ENCODE measurements at regions of chr15 and their contacts with region 1.

Region 1: DNA sequence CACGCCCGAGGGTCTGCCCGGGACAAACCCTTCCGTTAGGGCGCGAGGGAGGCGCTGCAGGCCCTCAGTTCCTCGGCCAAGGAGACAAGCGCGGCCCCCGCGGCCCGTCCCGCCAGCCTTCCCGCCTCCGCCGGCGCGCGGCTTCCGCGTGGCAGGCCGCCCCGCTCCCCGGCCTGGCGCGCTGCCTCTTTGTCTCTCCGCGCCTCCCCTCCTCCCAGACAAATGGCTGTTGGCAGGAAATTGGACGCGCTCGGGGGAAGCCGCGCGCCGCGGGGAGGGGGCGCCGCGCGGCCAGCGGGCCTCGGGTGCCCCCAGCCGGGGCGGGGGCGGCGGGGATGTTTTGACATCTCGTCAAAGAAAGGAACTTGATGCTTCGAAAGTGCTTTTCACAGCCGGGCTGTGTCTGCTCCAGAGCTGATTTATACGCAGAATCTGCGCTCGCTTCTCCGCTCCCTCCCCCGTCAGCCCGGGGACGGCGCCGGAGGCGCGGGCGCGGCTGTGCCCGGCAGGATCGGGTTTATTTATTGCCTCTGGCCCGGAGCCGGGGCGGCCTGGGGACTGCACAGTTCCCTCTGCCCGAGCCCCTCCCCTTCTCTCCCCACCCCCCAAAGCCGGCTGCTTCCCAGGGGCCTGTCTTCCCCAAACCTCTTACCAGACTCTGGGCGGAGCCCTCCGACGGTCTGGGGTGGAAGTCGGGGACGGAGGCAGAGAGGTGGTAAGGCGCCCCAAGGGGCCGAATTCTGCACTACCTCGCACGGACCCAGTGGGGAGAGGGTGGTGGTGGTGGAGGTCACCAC is 20.7 kb downstream of the SHF start:
- DNase-seq: peak; percentile 78 to 80
- ATAC-seq: peak; percentile 92 to 95
- H3K4me3 ChIP-seq: peak overlapping the region; percentile 67
- H3K27ac ChIP-seq: peak overlapping the region; percentile 92 to 100
- H3K4me1 ChIP-seq: peaks cover 11% of the 10 kb centered on the region
- CTCF ChIP-seq: peak; percentile 32; the same call in 1 of the 3 replicates
- EP300 ChIP-seq: no peak
- POLR2A ChIP-seq: peak; percentile 26
- RAD21 ChIP-seq: peak in 1 of 2 experiments; percentile 26; a peak in 1 of 5 replicates

Region 2: DNA sequence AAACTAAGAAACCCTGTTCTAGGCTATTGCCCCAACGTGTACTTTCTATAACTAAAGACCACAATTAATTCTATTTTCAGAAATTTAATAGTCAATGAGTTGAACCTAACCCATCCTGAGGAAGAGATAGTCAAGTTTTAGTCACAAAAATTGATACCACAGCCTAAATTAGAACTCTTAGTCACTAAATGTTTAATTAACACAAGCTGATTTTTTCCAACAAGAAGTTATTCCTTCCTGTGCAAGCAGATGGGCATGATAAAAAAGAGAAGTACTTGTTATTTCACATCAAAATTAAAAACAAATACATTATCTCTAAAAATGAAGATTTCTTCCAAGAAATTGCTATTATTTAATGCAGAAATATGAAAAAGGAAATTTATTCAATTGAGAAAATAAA is 248.9 kb before region 1 on chr15:
- CTCF ChIA-PET with region 1: no interaction called
- POLR2A ChIA-PET with region 1: no interaction called
- DNase-seq: no peak
- ATAC-seq: no peak
- H3K4me3 ChIP-seq: no peak overlapping the region
- H3K27ac ChIP-seq: no peak overlapping the region
- H3K4me1 ChIP-seq: no peaks in the 10 kb centered on the region
- CTCF ChIP-seq: no peak
- EP300 ChIP-seq: no peak
- POLR2A ChIP-seq: no peak
- RAD21 ChIP-seq: no peak

Region 3: GRCh38 chr15:45146405-45146804 is 20.6 kb before region 1 on chr15:
- CTCF ChIA-PET with region 1: interaction called, 30 read pairs
- POLR2A ChIA-PET with region 1: no interaction called
- DNase-seq: no peak
- ATAC-seq: no peak
- H3K4me3 ChIP-seq: no peak overlapping the region
- H3K27ac ChIP-seq: no peak overlapping the region
- H3K4me1 ChIP-seq: no peaks in the 10 kb centered on the region
- CTCF ChIP-seq: no peak
- EP300 ChIP-seq: no peak
- POLR2A ChIP-seq: no peak
- RAD21 ChIP-seq: no peak

Region 4: GRCh38 chr15:45179221-45179985 is 12.4 kb after region 1 on chr15:
- CTCF ChIA-PET with region 1: interaction called, 18 read pairs
- POLR2A ChIA-PET with region 1: no interaction called
- DNase-seq: peak; percentile 29 to 43
- ATAC-seq: peak in 1 of 2 experiments; percentile 71; a peak in 3 of 6 replicates
- H3K4me3 ChIP-seq: no peak overlapping the region
- H3K27ac ChIP-seq: no peak overlapping the region
- H3K4me1 ChIP-seq: 0 out of 3 replicates have a peak, but pooled peaks cover 4% of the 10 kb centered on the region
- CTCF ChIP-seq: peak; percentile 25; the same call in 1 of the 3 replicates
- EP300 ChIP-seq: no peak
- POLR2A ChIP-seq: no peak
- RAD21 ChIP-seq: no peak

Region 5: DNA sequence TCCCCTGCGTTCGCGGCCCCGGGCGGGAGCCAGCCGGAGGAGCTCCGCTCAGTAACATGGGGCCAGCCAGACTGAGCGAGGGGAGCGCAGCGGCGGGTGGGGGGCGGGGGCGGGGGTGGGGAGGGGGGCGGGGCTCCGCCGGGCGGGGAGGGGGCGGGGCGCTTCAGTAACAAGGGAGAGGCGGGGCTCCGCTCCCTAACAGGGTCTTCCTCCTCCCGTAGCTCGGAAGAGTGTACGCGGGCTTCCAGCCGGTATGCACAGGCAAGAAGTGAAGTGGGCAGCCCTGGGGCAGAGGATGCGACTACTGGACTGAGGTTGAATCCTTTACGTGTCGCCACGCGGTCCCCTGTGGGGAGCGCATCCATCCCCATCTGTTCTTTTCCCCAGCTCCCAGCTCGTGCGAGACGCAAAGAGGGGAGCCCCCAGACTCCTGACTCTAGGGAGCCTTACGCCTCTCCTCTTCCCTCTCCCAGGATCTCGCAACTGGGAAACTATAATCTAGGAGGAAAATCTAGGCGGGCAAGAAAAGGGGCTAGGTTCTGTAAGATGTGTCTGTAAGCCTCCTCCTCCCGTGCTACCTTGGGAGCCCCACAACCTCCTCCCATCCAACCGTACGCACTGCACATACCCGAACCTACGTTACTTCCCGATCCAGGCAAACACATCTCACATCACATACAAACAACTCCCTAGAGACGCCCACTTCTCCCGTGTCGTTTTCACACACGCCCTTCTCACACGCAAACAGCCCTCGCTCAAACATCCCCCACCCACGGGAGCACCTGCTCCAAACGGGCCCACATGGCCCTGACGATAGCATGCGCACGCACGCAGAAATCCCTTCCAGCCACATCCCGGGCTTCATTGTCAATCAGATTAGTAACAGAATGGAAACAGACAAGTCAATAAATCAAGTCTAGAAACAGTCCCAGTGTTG is 21.1 kb after region 1 on chr15 and contains the start of gene SHF:
- CTCF ChIA-PET with region 1: interaction called, 11 read pairs
- POLR2A ChIA-PET with region 1: no interaction called
- DNase-seq: peak; percentile 18 to 20
- ATAC-seq: peak; percentile 54 to 80; a peak in 5 of 6 replicates
- H3K4me3 ChIP-seq: peak within 1 kb of the TSS; percentile 52
- H3K27ac ChIP-seq: peak within 1 kb of the TSS; percentile 77 to 87
- H3K4me1 ChIP-seq: peaks cover 6% of the 10 kb centered on the region; the same call in 1 of the 3 replicates
- CTCF ChIP-seq: no peak
- EP300 ChIP-seq: no peak
- POLR2A ChIP-seq: no peak
- RAD21 ChIP-seq: no peak
- polyA plus RNA-seq, gene SHF: 0.36 and 0.62 TPM in 2 replicates

Region 6: DNA sequence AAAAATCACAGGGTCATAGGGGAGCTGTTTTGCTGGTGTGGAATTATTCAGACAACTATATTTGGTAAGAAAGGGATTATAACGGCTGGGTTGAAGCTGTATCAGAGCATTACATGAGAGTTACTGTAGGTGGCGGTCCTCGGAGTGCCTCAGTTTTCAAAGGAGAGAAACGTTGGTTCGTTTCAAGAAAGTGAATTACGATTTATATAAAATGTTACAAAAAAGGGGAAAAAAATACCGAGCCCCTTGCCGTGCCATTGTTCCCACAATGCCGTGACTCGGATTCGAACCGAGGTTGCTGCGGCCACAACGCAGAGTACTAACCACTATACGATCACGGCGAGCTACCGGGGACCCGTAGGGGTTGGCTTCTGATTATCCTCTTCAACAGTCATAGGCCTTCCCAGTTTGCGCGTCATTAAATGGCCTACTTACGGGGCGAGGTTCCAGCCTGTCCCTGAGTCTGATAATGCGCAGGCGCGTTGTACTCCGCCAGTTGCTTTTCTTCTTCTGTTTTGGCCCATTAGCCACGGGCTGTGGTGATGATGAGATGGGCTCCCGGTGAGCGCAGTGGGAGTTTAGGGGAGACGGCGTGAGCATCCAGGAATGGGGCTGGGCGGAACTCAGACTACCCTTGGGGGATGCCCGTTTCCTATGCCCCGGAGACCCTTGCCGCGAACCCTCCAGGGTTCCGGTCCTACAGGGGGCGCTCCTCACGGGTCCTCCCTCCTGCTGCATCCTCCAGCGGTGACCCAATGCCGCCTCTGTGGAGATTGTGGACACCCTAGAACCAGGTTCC is 31.5 kb after region 1 on chr15:
- CTCF ChIA-PET with region 1: interaction called, 104 read pairs
- POLR2A ChIA-PET with region 1: interaction called, 5 read pairs
- DNase-seq: peak; percentile 62 to 95
- ATAC-seq: peak; percentile 58 to 78
- H3K4me3 ChIP-seq: peak overlapping the region; percentile 88
- H3K27ac ChIP-seq: peak overlapping the region; percentile 86 to 88
- H3K4me1 ChIP-seq: peaks cover 5% of the 10 kb centered on the region; the same call in 2 of the 3 replicates
- CTCF ChIP-seq: peak; percentile 58
- EP300 ChIP-seq: no peak
- POLR2A ChIP-seq: peak; percentile 50
- RAD21 ChIP-seq: no peak

Region 7: GRCh38 chr15:45402162-45402954 is 235.3 kb after region 1 on chr15:
- CTCF ChIA-PET with region 1: interaction called, 39 read pairs
- POLR2A ChIA-PET with region 1: interaction called, 14 read pairs
- DNase-seq: peak; percentile 85 to 98
- ATAC-seq: peak; percentile 91 to 96
- H3K4me3 ChIP-seq: peak overlapping the region; percentile 93
- H3K27ac ChIP-seq: peak overlapping the region; percentile 93 to 98
- H3K4me1 ChIP-seq: peaks cover 12% of the 10 kb centered on the region; the same call in 2 of the 3 replicates
- CTCF ChIP-seq: no peak
- EP300 ChIP-seq: no peak
- POLR2A ChIP-seq: peak; percentile 71
- RAD21 ChIP-seq: no peak

Measured in A549 (cell line).